Ovary (tissue), 10 donors: ENCODE measurements at regions of chr17 and their contacts with region 1.

Region 1: GRCh38 chr17:14427900-14428647 is 127.2 kb downstream of the HS3ST3B1 start:
- DNase-seq: no peak
- H3K4me3 ChIP-seq: no peak overlapping the region
- H3K27ac ChIP-seq: no peak overlapping the region
- H3K4me1 ChIP-seq: no peaks in the 10 kb centered on the region
- H3K27me3 ChIP-seq: no peaks in the 10 kb centered on the region
- CTCF ChIP-seq: no peak
- EP300 ChIP-seq: no peak
- POLR2A ChIP-seq: no peak

Region 2: DNA sequence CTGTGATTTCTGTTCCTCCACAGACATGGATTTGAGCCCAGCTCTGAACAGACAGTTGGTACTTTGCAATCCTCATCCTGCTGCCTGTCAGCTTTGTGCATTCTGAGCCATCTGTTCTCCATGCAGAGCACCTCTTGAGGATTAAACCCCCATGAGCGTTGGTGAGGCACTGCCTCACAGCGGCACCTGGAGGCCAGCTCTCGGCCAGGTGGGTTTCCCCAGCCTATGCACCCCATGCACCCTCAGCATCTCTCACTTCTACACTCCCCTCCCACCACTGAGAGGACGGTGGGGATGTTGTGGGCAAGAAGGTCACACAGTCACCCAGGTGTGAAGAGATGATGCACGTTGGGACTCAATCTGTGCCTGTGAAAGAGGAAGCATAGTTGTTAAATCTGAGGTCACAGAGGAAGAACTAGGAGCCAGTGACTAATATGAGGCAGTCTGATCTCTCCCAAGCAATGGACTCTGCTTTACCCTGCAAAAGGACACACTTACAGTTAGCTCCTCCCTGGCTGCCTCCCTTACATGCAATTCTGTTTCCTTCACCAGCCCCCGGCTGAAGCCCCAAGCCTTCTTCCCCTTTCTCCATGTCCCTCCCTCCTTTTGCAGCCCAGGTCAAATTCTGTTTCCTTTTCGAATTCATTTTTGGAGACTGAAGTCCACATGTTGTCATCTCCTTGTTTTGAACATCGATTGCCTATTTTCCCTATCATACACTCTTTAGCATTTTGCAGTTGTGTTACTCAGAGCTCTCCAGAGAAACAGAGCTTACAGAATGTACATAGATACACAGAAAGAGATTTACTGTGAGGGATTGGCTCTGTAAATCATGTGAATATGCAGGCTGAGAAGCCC is 68.7 kb before region 1 on chr17:
- intact Hi-C with region 1: loop called in 1 of 4 experiments (anchors 10 kb)
- DNase-seq: no peak
- H3K4me3 ChIP-seq: no peak overlapping the region
- H3K27ac ChIP-seq: no peak overlapping the region
- H3K4me1 ChIP-seq: no peaks in the 10 kb centered on the region
- H3K27me3 ChIP-seq: no peaks in the 10 kb centered on the region
- CTCF ChIP-seq: no peak
- EP300 ChIP-seq: no peak
- POLR2A ChIP-seq: no peak